Colonic mucosa (tissue), 4 donors: ENCODE measurements at regions of chr2 and their contacts with region 1.

Region 1: GRCh38 chr2:27509326-27509725 is 12.7 kb downstream of the GCKR start:
- DNase-seq: no peak
- H3K4me3 ChIP-seq: no peak overlapping the region
- H3K27ac ChIP-seq: no peak overlapping the region
- H3K4me1 ChIP-seq: no peaks in the 10 kb centered on the region
- H3K27me3 ChIP-seq: no peaks in the 10 kb centered on the region
- CTCF ChIP-seq: no peak

Region 2: GRCh38 chr2:27566628-27567027 is 57.3 kb after region 1 on chr2:
- intact Hi-C with region 1: loop called (anchors 10 kb)
- DNase-seq: no peak
- H3K4me3 ChIP-seq: no peak overlapping the region
- H3K27ac ChIP-seq: no peak overlapping the region
- H3K4me1 ChIP-seq: no peaks in the 10 kb centered on the region
- H3K27me3 ChIP-seq: no peaks in the 10 kb centered on the region
- CTCF ChIP-seq: no peak

Region 3: GRCh38 chr2:28193627-28194403 is 684.5 kb after region 1 on chr2:
- intact Hi-C with region 1: no loop called
- DNase-seq: no peak
- H3K4me3 ChIP-seq: no peak overlapping the region
- H3K27ac ChIP-seq: no peak overlapping the region
- H3K4me1 ChIP-seq: peaks cover 4% of the 10 kb centered on the region
- H3K27me3 ChIP-seq: no peaks in the 10 kb centered on the region
- CTCF ChIP-seq: no peak